ENCODE measurements at regions of chr14 and their contacts with region 1.

Region 1: DNA sequence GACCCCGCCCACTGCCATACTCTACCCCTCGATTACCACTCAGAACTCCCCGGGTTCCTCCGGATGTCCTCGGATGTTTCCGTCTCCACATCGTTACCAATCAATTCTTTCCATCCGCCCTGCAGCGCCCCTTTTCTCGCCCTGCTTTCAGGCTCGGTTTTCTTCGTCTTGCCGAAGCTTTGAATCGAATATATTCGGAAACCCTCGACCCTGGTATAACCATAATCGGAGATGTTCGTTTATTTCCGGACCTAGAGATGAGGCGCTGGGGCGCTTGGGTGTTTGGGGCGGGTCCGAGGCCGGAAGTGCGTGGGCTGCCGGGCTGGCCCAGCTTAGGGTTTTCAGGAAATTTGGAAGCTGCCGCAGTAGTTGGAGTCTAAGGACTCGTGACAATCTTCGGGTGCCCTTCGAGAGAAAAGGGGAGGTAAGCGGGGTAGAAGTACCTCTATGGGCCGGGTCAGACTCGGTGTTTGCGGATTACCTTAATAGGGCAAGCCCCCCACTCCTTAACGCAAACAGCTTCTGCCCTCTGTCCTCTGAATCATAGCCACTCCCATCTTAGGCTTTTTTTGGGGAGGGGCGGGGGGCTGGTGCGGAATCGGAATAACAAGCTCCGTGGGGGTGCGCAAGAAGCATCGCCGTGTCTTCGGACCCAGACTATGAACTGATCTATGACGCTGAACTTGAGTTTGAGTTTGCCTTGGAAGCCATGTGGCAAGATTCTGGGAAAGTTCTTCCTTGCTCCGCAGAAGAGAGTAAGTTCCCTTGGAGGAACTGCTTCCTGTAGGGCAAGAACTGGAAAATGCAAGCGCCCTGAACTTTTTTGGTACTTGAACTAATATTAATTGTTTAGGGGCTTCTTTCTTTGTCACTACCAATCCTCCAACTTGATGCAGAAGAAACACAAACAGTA is at the start of gene C14orf119:
- DNase-seq: peak; percentile 100
- H3K4me3 Mint-ChIP-seq: no peak within 1 kb of the TSS
- H3K27ac Mint-ChIP-seq: no peak within 1 kb of the TSS
- H3K4me1 Mint-ChIP-seq: peaks cover 25% of the 10 kb centered on the region
- H3K27me3 Mint-ChIP-seq: no peaks in the 10 kb centered on the region
- CTCF ChIP-seq: no peak
- total RNA-seq, gene C14orf119: 39.6 and 54.8 TPM in 2 replicates

Region 2: GRCh38 chr14:23006544-23007419 is 88.7 kb before region 1 on chr14:
- CTCF ChIA-PET with region 1: interaction called, 6 read pairs
- POLR2A ChIA-PET with region 1: interaction called, 22 read pairs
- intact Hi-C with region 1: no loop called
- DNase-seq: peak; percentile 98
- H3K4me3 Mint-ChIP-seq: peak overlapping the region; percentile 94
- H3K27ac Mint-ChIP-seq: peak overlapping the region; percentile 99
- H3K4me1 Mint-ChIP-seq: peaks cover 38% of the 10 kb centered on the region
- H3K27me3 Mint-ChIP-seq: no peaks in the 10 kb centered on the region
- CTCF ChIP-seq: peak; percentile 15

Region 3: DNA sequence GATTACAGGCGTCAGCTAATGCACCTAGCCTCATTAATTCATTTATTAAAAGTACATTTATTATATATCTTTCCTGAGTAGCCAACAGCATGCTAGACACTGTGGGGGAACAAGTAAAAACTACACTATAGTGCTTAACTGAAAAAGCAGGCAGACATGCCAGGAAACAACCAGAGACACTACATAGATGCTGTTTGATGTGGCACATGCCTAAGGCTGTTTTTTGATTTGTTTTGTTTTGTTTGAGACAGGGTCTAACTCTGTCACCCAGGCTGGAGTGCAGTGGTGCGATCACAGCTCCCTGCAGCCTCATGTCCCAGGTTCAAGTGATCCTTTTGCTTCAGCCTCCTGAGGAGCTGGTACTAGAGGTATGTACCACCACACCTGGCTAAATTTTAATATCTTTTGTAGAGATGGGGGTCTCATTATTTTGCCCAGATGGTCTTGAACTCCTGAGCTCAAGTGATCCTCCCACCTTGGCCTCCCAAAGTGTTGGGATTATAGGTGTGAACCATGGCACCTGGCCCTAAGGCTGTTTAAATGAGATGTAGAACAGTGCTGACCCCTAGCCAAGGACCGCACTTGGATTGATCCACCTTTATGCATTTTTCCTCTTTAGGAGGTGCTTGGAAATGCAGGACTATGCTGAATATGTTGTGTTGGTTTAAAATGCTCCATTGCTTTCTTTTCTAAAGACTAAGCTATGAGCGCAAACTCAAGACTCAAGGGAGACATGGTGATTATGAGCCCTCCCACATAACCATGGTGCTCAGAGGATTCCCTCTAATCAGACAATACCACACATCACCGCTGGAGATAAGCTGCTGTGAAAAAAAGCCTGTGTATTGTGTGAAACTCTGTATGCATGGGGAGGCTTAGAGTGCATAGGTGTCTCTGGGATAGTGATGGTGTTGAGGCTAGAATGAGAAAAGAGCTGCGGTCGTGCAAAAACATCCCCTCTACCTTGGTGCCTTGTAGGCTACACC is 75.0 kb before region 1 on chr14:
- CTCF ChIA-PET with region 1: no interaction called
- POLR2A ChIA-PET with region 1: no interaction called
- intact Hi-C with region 1: no loop called
- DNase-seq: no peak
- H3K4me3 Mint-ChIP-seq: no peak overlapping the region
- H3K27ac Mint-ChIP-seq: no peak overlapping the region
- H3K4me1 Mint-ChIP-seq: no peaks in the 10 kb centered on the region
- H3K27me3 Mint-ChIP-seq: no peaks in the 10 kb centered on the region
- CTCF ChIP-seq: no peak

Region 4: DNA sequence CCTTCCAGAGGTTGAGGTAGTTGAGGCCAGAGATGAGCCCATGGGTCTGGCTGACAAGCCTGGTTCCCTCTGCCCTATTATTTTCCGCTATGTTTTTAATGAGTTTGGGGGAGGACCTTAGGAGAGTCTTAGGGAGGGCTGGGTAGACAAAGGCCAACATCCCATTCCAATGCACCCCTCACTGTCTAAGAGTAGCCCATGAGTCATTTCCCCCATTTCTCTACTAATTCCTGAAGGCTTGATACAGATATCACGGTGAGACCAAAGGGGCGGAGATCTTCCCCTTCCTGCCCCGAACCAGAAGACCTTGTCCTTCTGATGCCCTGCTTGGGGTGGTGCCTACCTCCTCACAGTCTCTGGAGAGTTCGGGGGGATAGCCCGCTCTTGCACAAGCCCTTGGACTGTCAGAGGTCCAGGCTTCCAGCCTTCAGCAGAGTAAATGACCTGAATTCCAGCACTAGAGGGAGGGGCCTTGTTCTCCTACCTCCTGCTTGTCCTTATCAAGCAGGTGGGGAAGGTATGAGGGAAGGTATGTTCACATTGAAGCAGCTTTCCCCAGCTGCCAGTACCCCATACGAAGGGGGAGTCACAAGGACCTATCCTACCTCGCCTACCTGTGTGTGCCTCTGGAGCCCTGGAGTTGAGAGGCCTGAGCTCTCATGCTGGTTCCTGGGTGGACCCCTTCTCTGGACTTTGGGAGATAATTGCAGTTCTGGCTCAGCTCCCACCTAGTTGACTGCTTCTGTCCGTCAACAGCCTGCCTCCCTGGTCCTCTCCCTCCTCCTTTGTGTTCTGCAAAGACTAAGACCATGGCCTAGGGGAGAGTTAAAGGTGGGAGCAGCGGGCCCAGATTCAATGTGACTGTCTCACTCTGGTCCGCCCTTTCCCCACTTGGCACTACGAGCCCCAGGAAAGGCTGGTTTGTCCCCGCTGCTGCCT is 49.8 kb before region 1 on chr14:
- CTCF ChIA-PET with region 1: no interaction called
- POLR2A ChIA-PET with region 1: no interaction called
- intact Hi-C with region 1: no loop called
- DNase-seq: no peak
- H3K4me3 Mint-ChIP-seq: no peak overlapping the region
- H3K27ac Mint-ChIP-seq: no peak overlapping the region
- H3K4me1 Mint-ChIP-seq: no peaks in the 10 kb centered on the region
- H3K27me3 Mint-ChIP-seq: no peaks in the 10 kb centered on the region
- CTCF ChIP-seq: no peak

Region 5: GRCh38 chr14:23076785-23077408 is 18.6 kb before region 1 on chr14:
- CTCF ChIA-PET with region 1: interaction called, 105 read pairs
- POLR2A ChIA-PET with region 1: interaction called, 74 read pairs
- intact Hi-C with region 1: loop called (anchors 2 kb)
- DNase-seq: peak; percentile 48
- H3K4me3 Mint-ChIP-seq: no peak overlapping the region
- H3K27ac Mint-ChIP-seq: no peak overlapping the region
- H3K4me1 Mint-ChIP-seq: peaks cover 30% of the 10 kb centered on the region
- H3K27me3 Mint-ChIP-seq: no peaks in the 10 kb centered on the region
- CTCF ChIP-seq: peak; percentile 55

Region 6: DNA sequence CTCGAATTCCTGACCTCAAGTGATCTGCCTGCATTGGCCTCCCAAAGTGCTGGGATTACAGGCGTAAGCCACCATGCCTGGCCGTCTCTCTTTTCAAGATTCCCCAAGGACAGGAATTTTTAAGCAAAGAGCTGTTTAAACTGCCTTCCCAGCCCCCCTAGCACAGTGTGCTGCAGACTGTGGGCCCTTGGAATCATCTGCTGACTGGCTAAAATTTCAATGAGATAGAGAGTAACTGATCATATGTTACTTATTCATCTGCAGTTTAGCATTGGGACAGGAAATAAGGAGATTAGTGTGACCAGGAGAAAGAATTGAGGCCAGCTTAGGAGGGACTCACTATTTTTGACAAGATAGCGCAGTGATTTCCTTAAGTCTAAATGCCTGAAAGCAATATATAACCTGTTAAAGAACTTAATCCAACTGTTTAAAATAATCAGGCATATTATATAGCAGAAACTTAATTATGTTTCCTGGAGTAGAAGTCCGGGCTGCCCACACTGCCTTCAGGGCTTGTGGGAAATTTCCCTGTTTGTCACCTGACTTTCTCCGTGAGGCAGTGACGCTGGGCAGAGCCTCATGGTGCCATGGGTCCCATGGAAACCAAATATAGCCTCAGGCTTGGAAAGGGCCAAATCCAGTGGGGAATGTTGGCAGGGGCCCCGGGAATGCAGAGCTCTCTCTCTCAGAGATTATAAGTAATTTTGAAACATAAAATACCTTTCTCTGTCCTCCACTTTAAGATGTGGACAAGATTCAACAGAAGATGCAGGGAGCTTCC is 46.4 kb after region 1 on chr14:
- CTCF ChIA-PET with region 1: no interaction called
- POLR2A ChIA-PET with region 1: interaction called, 12 read pairs
- intact Hi-C with region 1: no loop called
- DNase-seq: peak; percentile 83
- H3K4me3 Mint-ChIP-seq: no peak overlapping the region
- H3K27ac Mint-ChIP-seq: peak overlapping the region; percentile 83
- H3K4me1 Mint-ChIP-seq: peaks cover 59% of the 10 kb centered on the region
- H3K27me3 Mint-ChIP-seq: no peaks in the 10 kb centered on the region
- CTCF ChIP-seq: no peak

Region 7: DNA sequence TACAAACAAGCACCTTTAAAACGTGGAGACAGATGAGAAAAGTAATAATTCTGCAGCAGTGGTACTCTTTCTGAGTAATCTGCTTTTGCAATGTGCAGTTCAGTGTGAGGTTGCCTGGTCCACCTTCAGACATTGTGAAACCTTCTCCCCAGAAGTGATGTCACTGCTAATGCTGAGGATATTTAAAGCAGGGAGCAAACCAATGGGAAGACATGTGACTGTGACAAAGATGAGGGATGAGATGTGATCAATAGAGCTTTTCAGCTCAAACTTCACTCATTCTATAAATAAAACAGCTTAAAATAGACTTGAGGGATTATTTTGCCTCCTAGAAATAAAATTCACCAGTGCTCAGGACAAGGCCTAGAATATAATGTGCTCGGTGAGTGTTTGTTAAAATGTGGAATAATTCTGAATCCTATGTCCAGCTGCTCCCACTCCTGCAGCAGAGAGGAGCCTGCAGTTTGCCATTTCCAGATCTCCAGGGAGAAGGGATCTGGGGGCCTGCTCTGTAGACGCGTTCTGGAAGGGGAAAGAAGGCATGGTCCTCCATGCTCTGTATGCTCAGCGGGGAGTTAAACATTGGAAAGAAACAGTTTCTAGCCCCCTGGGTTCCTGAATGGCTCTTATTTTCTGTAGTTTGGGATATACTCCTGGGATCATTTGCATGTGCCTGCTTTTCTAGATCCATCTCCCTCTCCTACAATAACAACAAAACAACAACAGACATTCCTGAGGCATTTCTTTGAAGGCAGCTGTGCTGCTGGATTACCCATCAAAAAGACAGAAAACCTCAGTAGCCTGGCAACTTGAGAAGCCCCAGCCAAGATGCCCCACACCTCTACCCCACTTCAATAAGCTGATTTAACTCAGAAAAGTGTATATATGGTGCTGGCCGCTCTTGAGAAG is 79.1 kb after region 1 on chr14:
- CTCF ChIA-PET with region 1: no interaction called
- POLR2A ChIA-PET with region 1: interaction called, 15 read pairs
- intact Hi-C with region 1: no loop called
- DNase-seq: peak; percentile 65
- H3K4me3 Mint-ChIP-seq: no peak overlapping the region
- H3K27ac Mint-ChIP-seq: no peak overlapping the region
- H3K4me1 Mint-ChIP-seq: peaks cover 39% of the 10 kb centered on the region
- H3K27me3 Mint-ChIP-seq: no peaks in the 10 kb centered on the region
- CTCF ChIP-seq: no peak

Region 8: GRCh38 chr14:23320774-23321571 is 225.5 kb after region 1 on chr14 and contains the start of gene PABPN1:
- CTCF ChIA-PET with region 1: no interaction called
- POLR2A ChIA-PET with region 1: interaction called, 13 read pairs
- intact Hi-C with region 1: no loop called
- DNase-seq: peak; percentile 100
- H3K4me3 Mint-ChIP-seq: peak within 1 kb of the TSS; percentile 84
- H3K27ac Mint-ChIP-seq: peak within 1 kb of the TSS; percentile 97
- H3K4me1 Mint-ChIP-seq: peaks cover 11% of the 10 kb centered on the region
- H3K27me3 Mint-ChIP-seq: no peaks in the 10 kb centered on the region
- CTCF ChIP-seq: no peak
- total RNA-seq, gene PABPN1: 153 and 167 TPM in 2 replicates

Measured in MCF 10A (cell line).